ENCODE measurements at regions of chr17 and their contacts with region 1.

Region 1: DNA sequence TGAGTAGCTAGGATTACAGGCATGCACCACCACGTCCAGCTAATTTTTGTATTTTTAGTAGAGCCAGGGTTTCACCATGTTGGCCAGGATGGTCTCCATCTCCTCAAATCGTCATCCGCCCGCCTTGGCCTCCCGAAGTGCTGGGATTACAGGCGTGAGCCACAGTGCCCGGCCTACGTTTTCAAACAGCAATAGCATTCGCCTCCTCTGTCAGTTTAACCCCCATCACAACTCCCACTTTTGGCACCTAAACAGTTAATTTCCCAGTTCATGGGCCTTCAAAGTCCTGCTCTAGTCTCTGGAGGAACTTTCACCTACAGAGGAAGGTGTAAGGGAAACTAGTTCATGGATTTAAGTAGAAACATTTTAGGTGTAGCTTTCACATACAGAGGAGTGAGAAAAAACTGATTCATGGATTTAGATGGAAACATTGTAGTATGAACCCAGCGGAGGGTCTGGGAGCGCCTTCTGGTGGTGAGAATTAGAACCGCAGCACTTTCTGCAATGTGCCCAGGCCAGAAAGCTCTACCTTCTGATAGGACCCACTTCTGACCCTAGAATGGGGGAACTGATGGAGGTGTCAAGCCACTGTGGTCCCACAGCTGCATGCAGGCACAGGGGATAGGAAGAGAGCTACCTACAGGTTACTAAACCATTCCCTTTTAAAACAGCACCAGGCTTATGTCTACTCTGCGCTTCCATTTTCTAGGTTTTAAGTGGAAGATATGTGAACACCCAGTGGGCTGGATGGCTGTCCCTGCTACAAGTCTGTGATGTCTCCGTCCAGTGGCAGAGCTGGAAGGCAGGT is 12.0 kb upstream of the MEOX1 start:
- DNase-seq: peak; percentile 83
- ATAC-seq: peak; percentile 41
- H3K4me3 Mint-ChIP-seq: no peak overlapping the region
- H3K27ac Mint-ChIP-seq: 0 out of 2 replicates have a peak overlapping the region, but pooled peaks have one; percentile 80
- H3K4me1 Mint-ChIP-seq: peaks cover 66% of the 10 kb centered on the region
- H3K27me3 Mint-ChIP-seq: no peaks in the 10 kb centered on the region
- CTCF ChIP-seq: peak; percentile 90

Region 2: DNA sequence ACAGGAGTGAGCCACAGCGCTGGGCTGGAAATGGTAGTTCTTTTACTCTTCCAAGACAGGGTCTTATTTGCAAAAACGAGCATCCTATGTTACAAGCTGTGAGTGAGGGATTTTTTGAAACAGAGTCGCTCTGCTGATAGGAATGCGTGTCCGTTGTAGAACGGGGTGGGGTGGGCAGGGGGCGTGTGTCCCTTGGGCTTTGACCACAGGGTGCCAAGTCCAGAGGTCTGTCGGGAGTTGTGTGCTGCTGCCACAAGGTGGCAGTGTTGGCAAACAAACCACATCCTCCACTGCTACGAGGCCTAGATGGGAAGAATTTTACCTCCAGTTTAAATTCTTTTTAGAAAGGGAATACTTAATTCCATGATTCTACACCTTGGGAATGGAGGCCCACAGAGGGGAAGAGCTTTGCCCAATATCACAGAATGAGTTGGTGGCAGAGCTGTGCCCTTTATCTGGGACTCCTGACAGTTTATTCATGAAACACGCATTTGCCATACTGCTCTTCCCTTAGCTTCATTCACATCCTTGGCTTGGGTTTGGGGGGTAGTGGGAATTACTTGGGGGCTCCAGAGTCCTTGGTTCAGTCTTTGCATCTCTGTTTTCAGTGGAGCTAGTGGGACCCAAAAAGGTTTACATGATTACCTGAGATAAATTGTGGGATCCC is 97.0 kb before region 1 on chr17:
- CTCF ChIA-PET with region 1: interaction called, 12 read pairs
- POLR2A ChIA-PET with region 1: interaction called, 5 read pairs
- DNase-seq: peak; percentile 85
- ATAC-seq: peak; percentile 83
- H3K4me3 Mint-ChIP-seq: peak overlapping the region; percentile 51
- H3K27ac Mint-ChIP-seq: no peak overlapping the region
- H3K4me1 Mint-ChIP-seq: peaks cover 36% of the 10 kb centered on the region
- H3K27me3 Mint-ChIP-seq: no peaks in the 10 kb centered on the region
- CTCF ChIP-seq: peak; percentile 89

Region 3: DNA sequence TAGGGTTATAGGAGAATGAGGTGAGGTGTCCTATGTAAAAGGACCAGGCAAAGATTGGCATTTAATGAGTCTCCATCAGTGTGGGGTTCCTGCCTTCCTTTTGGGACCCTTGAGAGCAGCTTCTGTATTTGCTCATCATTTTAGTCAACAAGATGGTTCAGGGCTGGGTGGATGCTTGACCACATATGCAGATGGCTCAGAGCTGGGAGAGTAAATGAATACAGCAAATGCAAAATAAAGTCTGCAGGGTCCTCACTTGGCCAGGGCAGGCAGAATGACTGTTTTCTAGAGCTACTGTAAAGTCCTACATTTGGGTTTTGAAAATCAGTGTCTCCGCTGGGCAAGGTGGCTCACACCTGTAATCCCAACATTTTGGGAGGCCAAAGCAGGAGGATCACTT is 70.4 kb before region 1 on chr17:
- CTCF ChIA-PET with region 1: no interaction called
- POLR2A ChIA-PET with region 1: no interaction called
- DNase-seq: no peak
- ATAC-seq: no peak
- H3K4me3 Mint-ChIP-seq: no peak overlapping the region
- H3K27ac Mint-ChIP-seq: no peak overlapping the region
- H3K4me1 Mint-ChIP-seq: peaks cover 8% of the 10 kb centered on the region
- H3K27me3 Mint-ChIP-seq: no peaks in the 10 kb centered on the region; the same call in 1 of the 2 replicates
- CTCF ChIP-seq: no peak

Region 4: GRCh38 chr17:43631429-43631828 is 42.3 kb before region 1 on chr17:
- CTCF ChIA-PET with region 1: interaction called, 11 read pairs
- POLR2A ChIA-PET with region 1: no interaction called
- DNase-seq: no peak
- ATAC-seq: no peak
- H3K4me3 Mint-ChIP-seq: no peak overlapping the region
- H3K27ac Mint-ChIP-seq: no peak overlapping the region
- H3K4me1 Mint-ChIP-seq: peaks cover 13% of the 10 kb centered on the region
- H3K27me3 Mint-ChIP-seq: no peaks in the 10 kb centered on the region
- CTCF ChIP-seq: no peak

Region 5: DNA sequence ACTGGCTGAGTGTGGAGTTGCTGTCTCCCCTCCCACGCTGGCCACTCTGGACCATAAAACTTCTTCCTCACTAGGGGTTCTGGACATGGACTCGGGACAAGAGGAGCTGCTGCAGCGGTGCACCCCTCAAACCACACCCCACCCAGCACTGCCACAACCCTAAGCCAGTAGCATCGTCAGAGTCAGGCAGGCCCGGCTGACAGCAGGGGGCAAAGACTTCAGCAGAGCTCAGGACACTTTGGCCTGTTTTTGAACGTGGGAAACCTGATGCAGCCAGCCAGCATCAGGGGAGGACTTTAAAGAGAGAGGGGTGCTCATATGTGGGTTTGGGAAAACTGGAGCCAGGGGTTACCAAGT is 21.6 kb before region 1 on chr17:
- CTCF ChIA-PET with region 1: interaction called, 10 read pairs
- POLR2A ChIA-PET with region 1: no interaction called
- DNase-seq: no peak
- ATAC-seq: no peak
- H3K4me3 Mint-ChIP-seq: no peak overlapping the region
- H3K27ac Mint-ChIP-seq: no peak overlapping the region
- H3K4me1 Mint-ChIP-seq: peaks cover 19% of the 10 kb centered on the region
- H3K27me3 Mint-ChIP-seq: peaks cover 4% of the 10 kb centered on the region
- CTCF ChIP-seq: no peak

Region 6: GRCh38 chr17:43694077-43694870 is 20.6 kb after region 1 on chr17:
- CTCF ChIA-PET with region 1: interaction called, 13 read pairs
- POLR2A ChIA-PET with region 1: no interaction called
- DNase-seq: peak; percentile 86
- ATAC-seq: peak; percentile 91
- H3K4me3 Mint-ChIP-seq: no peak overlapping the region
- H3K27ac Mint-ChIP-seq: no peak overlapping the region
- H3K4me1 Mint-ChIP-seq: peaks cover 17% of the 10 kb centered on the region
- H3K27me3 Mint-ChIP-seq: 0 out of 2 replicates have a peak, but pooled peaks cover 2% of the 10 kb centered on the region
- CTCF ChIP-seq: peak; percentile 81

Measured in WTC11 (cell line).